AG04449 (cell line): ENCODE measurements at regions of chr11 and their contacts with region 1.

Region 1: DNA sequence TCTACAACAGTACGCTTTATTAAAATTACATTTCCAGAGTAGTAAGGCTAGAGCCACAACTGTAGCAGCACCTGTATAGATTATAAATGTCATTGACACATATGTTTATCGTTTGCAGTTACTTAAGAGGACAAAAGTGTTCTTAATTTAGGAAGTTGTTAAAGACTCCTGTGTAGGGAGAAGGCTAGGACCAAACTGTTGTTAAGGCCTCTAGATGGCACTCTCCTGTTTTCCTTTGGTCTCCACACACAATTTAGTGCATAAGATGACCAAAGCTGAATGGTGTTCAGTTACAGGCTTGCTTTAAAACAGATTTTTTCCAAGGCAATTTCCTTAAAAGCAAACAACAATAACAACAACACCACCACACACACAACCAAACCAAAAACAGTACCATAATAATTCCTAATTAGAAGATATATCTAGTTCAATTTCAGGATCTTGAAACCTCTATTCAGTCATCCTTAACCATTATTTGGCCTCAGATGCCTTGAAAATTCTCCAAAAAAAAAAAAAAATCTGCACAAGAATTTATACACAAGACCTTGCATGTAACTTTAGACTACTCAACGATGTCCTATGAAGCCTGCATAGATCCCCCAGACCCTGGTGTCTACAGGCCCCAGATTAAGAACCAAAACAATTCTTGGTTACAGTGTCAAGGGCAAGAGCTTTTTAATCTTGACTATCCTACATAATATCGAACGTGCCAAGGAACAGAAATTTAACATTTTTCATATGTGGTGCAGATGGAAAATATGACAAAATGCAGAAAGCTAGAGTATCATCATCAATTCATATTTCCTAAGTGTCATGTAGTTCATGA is 42.6 kb upstream of the APOA1 start:
- DNase-seq: no peak
- H3K4me3 ChIP-seq: no peak overlapping the region
- CTCF ChIP-seq: peak; percentile 76

Region 2: DNA sequence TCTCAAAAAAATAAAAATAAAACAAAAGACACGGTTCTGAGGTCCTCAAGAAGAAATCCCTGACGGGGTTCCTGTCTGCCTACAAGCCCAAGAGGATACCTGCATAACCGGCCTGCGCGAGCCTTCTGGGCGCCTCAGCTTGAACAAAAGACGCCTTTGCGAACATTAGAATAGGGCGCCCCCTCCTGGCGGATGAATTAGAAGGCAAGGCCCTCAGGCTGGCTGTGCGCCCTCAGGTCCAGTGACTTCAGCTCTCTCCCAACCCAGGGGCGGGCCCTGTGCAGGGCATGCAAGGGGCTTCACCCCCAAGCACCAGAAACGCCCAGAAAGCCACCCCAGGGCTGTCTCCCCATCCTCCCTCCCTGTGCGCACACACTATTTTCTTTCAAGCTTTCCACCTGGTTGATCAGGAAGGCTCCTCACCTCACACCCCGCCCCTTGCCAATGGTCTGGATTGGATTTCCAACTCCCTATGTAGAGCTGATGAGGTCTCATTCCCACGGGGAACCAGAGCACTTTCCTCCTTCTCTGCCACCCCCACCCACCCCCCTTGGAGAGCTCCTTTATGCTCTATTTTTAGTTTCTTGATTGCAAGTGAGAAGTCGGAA is 380.5 kb before region 1 on chr11:
- CTCF ChIA-PET with region 1: no interaction called
- POLR2A ChIA-PET with region 1: no interaction called
- DNase-seq: no peak
- H3K4me3 ChIP-seq: no peak overlapping the region
- CTCF ChIP-seq: peak; percentile 48

Region 3: DNA sequence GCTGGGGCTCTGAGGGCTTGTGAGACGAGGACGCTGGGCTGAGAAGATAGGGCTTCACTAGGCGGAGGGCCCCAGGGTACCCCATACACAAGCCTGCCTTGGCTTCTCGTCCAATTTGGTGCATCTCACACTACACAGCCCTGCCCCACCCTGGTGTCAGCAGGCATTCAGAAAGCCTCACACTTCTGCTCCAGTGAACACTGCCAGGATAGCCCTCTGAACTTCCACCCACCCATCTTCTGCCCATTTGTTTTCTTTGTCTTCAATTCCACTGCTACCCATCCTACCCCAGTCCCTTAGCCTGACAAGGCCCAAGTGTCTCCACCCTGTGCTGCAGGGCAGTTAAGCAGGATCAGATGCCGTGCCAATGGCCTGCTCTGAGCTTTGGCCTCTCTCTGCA is 105.4 kb before region 1 on chr11:
- CTCF ChIA-PET with region 1: no interaction called
- POLR2A ChIA-PET with region 1: no interaction called
- DNase-seq: no peak
- H3K4me3 ChIP-seq: no peak overlapping the region
- CTCF ChIP-seq: no peak

Region 4: GRCh38 chr11:116861539-116861938 is 18.5 kb before region 1 on chr11:
- CTCF ChIA-PET with region 1: interaction called, 55 read pairs
- POLR2A ChIA-PET with region 1: interaction called, 3 read pairs
- DNase-seq: no peak
- H3K4me3 ChIP-seq: no peak overlapping the region
- CTCF ChIP-seq: no peak

Region 5: GRCh38 chr11:116890193-116890592 is 10.2 kb after region 1 on chr11:
- CTCF ChIA-PET with region 1: interaction called, 48 read pairs
- POLR2A ChIA-PET with region 1: no interaction called
- DNase-seq: no peak
- H3K4me3 ChIP-seq: no peak overlapping the region
- CTCF ChIP-seq: no peak